PC-3 (cell line): ENCODE measurements at regions of chr12 and their contacts with region 1.

Region 1: DNA sequence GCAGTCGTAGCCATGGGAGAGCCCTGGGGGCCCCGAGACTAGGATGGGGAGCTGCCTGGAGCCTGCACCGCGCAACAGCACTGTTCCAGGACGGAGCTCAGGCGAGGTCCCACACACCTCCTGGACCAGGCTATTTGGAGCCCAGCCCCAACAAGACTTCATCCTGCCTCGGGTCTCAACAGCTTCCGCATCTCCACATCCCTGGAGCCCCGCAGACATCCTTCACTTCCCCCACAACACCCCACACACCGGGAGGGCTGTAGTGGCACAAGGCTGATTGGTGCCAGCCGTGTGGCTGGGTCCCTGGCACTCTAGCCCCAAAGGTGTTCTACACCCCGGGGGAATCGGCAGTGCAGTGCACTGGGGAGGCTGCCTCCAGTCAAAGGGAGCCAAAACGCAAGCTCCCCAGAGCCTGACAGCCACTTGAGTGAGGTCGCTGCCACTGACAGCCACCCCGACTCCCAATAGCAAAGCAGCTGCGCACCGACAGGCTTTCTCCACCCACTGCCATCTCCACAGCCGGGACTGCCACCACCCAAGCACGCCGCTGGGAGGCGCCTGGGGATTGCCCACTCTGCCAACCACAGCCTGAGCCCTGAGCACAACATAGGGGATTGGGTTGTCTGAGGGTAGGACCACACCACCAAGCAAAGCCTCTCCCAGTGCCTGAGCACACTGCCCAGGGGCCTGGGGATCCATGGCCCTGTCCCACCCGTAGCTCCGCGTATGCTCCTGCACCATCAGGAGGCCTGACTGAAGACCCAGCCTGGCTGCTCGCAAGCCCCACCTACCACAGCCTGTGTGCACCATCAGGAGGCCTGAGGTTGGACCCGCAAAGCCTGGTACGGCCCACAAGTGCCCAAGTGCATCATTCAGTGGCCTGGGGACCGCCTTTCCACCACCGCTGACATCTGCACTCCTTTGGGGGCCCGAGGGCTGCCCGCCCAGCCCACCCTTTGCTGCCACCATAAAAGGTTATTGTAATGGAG is 13.2 kb upstream of the KLRF1 start:
- DNase-seq: peak; percentile 43
- ATAC-seq: peak; percentile 87
- H3K4me3 ChIP-seq: no peak overlapping the region
- H3K27ac ChIP-seq: no peak overlapping the region
- H3K4me1 ChIP-seq: no peaks in the 10 kb centered on the region
- H3K27me3 ChIP-seq: peaks cover 17% of the 10 kb centered on the region
- CTCF ChIP-seq: peak; percentile 63

Region 2: GRCh38 chr12:9925708-9926393 is 111.7 kb after region 1 on chr12:
- CTCF ChIA-PET with region 1: no interaction called
- POLR2A ChIA-PET with region 1: no interaction called
- intact Hi-C with region 1: loop called (anchors 1 kb)
- DNase-seq: peak; percentile 57
- ATAC-seq: peak; percentile 40; the same call in 1 of the 2 replicates
- H3K4me3 ChIP-seq: no peak overlapping the region
- H3K27ac ChIP-seq: no peak overlapping the region
- H3K4me1 ChIP-seq: no peaks in the 10 kb centered on the region
- H3K27me3 ChIP-seq: no peaks in the 10 kb centered on the region
- CTCF ChIP-seq: peak; percentile 63